ENCODE measurements at regions of chr11 and their contacts with region 1.

Region 1: GRCh38 chr11:60924110-60924905 is at the start of gene TMEM132A:
- DNase-seq: peak; percentile 82 to 91
- H3K4me3 ChIP-seq: peak within 1 kb of the TSS; percentile 61 to 86 (median 72)
- H3K27ac ChIP-seq: peak within 1 kb of the TSS; percentile 13 to 74 (median 70)
- H3K4me1 ChIP-seq: peaks cover 18 to 60% (median 54%) of the 10 kb centered on the region in 4 donors
- H3K27me3 ChIP-seq: peaks cover 0 to 25% (median 14%) of the 10 kb centered on the region in 3 donors
- CTCF ChIP-seq: no peak
- EP300 ChIP-seq: no peak
- POLR2A ChIP-seq: no peak
- total RNA-seq, gene TMEM132A: 8.4 to 142 (median 29.2) TPM

Region 2: DNA sequence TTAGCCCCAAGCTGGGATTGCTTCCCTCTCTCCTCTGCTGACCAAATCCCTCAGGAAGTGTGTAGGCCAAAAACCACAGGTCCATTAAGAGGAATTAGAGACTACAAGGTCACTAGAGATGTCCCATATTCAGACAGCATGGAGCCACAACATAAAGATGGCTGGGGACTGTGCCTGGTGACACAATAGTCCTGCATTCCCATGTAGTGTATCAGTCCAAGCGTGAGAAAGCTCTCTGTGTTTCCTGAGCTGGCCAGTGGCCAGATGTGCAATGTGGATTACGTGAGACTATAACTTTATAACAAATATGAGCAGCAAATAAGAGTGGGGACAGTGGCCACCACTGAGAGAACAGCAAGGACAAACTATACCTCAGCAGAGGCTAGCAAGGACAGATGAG is 146.7 kb before region 1 on chr11:
- intact Hi-C with region 1: no loop called
- DNase-seq: peak in 1 of 2 donors; percentile 50
- H3K4me3 ChIP-seq: no peak overlapping the region
- H3K27ac ChIP-seq: no peak overlapping the region
- H3K4me1 ChIP-seq: peaks cover 0 to 15% (median 7%) of the 10 kb centered on the region in 4 donors
- H3K27me3 ChIP-seq: no peaks in the 10 kb centered on the region
- CTCF ChIP-seq: no peak
- EP300 ChIP-seq: no peak
- POLR2A ChIP-seq: no peak

Region 3: GRCh38 chr11:61120706-61121191 is 196.4 kb after region 1 on chr11:
- intact Hi-C with region 1: loop called (anchors 5 kb)
- DNase-seq: peak in 1 of 2 donors; percentile 89
- H3K4me3 ChIP-seq: no peak overlapping the region
- H3K27ac ChIP-seq: no peak overlapping the region
- H3K4me1 ChIP-seq: peaks cover 11 to 15% (median 13%) of the 10 kb centered on the region in 4 donors
- H3K27me3 ChIP-seq: no peaks in the 10 kb centered on the region
- CTCF ChIP-seq: no peak
- EP300 ChIP-seq: no peak
- POLR2A ChIP-seq: no peak

Measured in stomach (tissue), 19 donors.